ENCODE measurements at regions of chrX and their contacts with region 1.

Region 1: DNA sequence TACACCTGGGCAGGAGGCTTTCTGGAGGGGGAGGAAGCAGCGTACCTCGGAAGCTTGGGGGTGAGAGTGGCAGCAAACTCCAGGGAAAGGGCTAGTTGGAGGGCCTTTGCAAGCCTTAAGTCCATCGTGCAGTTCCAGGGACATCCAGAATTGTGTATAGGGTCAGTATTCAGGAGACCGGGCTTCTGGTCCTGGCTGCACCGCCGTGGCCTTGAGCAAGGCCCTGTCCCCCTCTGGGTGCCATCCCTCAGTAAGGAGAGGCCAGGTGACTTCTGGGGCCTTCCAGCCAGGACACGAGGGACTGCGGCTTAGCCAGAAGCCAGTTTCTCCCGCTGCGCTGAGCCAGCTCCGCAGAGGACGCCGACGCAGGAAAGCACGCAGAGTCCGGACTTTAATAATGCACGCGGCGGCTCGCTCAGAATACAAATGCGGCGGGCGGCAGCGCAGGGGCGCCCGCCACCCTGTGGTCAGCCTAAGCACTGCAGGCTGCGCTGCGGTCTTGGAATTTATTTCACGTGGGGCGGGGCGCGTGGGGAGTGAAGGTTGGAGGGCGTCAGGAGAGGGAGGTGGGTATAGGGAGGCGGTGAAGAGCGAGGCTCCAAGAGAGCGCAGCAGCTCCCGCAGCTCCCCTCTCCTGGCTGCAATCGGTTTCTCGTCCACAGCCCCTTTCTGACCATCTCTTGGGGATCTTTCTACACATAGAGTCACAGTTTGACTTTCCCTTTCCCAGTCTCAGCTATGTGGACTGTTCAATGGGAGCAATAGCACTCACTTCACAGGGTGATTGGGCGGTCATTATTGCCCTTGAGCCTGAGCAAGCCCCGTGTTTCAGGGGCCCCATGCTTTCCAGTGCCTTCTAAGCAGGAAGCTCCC is 94.1 kb upstream of the GPR50 start:
- DNase-seq: peak; percentile 21 to 85 (median 63)
- ATAC-seq: peak; percentile 84 to 98 (median 95)
- H3K4me3 ChIP-seq: no peak overlapping the region
- H3K27ac ChIP-seq: no peak overlapping the region
- H3K4me1 ChIP-seq: no peaks in the 10 kb centered on the region
- H3K27me3 ChIP-seq: peaks cover 0 to 15% (median 0%) of the 10 kb centered on the region in 4 donors
- CTCF ChIP-seq: peak; percentile 81 to 92 (median 88)

Region 2: DNA sequence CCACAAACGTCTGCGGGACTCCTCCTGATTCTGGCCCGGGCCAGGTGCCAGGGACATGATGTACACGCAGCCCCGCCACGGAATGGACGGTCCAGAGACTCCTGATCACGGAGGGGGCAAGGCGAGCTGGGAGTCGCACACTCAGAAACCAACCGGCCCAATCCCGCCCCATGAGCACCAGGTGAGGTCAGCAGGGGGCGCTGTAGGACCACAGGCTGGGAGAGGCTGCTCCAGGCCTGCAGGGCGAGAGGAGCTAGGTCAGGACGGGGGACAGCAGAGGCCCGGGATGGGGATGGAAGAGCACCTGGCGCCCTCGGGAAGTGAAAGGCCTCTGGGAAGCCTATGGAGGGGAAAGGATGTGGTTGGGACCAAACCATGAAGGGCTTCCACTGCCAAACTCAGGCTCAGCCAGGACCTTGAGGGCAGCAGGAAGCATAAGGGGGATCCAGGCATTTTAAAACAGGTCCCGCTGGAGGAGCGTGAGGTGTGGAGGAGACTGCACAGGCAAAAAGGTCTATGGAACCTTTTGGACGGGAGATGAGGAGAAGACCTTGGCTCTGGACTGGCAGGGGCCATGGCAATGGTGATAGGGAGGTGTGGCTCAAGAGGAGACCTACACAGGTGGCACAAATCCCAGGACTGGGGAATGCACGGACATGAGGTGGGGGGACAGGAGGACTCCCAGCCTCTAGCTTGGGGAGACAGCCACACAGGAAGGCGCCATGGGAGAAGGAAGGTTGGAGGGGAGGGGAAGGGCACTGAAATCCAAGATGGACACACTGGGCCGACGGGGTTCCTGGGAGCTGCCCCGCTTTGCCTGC is 310.0 kb before region 1 on chrX:
- intact Hi-C with region 1: loop called in 2 of 3 experiments (anchors 5 to 10 kb)
- DNase-seq: peak; percentile 54 to 95 (median 80)
- ATAC-seq: peak; percentile 75 to 94 (median 88)
- H3K4me3 ChIP-seq: no peak overlapping the region
- H3K27ac ChIP-seq: no peak overlapping the region
- H3K4me1 ChIP-seq: no peaks in the 10 kb centered on the region
- H3K27me3 ChIP-seq: no peaks in the 10 kb centered on the region
- CTCF ChIP-seq: peak; percentile 50 to 76 (median 70)

Region 3: DNA sequence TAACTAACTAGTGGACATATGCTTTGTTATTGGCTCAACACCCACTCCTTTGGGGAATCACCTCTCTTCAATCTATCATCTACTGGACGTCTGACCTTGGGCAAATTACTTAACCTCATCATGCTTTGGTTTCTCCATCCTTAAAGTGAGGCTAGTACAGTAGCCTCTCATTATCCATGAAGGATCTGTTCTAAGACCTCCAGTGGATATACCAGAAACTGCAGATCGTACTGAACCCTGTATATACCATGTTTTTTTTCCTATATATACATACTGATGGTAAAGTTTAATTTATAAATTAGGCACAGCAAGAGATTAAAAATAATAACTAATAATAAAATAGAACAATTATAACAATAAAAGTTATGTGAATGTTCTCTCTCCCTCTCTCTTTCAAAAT is 43.0 kb before region 1 on chrX:
- intact Hi-C with region 1: no loop called
- DNase-seq: no peak
- ATAC-seq: no peak
- H3K4me3 ChIP-seq: no peak overlapping the region
- H3K27ac ChIP-seq: no peak overlapping the region
- H3K4me1 ChIP-seq: no peaks in the 10 kb centered on the region
- H3K27me3 ChIP-seq: no peaks in the 10 kb centered on the region
- CTCF ChIP-seq: no peak

Measured in pancreas (tissue), 10 donors.